Activated B cell treated with CpG ODN at 0.5 μM for 24 hours (primary cell): ENCODE measurements at regions of chr11 and their contacts with region 1.

Region 1: DNA sequence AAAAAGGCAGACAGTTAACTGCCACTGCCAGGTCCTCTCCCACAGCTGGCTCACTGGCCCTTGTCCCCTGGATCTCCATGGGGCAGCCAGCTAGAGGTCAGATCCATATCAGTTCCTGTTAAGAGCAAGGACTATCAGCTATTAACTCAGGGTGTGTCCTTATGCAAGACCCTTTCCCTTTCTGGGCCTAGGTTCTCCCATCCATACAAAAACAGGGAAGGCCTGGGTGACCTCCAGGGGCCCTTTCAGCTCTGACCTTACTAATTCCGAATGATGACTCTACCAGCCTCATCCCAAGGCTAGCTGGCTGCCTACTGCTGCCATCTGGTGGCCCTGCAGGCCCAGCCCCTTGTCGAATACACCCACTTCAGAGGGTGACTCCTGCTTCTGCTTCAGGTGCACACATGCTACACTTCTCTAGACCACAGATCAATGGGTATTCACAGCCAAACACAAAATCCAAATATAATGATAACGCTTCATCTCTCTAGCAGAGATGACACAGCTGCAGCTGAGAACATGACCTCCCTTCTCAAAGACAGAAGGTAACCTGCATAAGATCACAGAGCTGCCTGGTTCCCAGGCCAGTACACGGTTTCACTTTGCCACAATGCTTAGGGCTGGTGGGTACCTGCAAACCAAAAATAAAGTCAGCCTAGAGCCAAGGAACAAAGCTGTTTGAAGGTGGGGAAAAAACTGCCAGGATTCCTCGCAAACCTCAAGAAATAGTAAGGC is 34.1 kb downstream of the SERGEF start:
- DNase-seq: no peak
- ATAC-seq: peak; percentile 25
- H3K4me3 Mint-ChIP-seq: no peak overlapping the region
- H3K27ac Mint-ChIP-seq: no peak overlapping the region
- H3K4me1 Mint-ChIP-seq: no peaks in the 10 kb centered on the region
- H3K27me3 Mint-ChIP-seq: no peaks in the 10 kb centered on the region
- CTCF ChIP-seq: no peak

Region 2: DNA sequence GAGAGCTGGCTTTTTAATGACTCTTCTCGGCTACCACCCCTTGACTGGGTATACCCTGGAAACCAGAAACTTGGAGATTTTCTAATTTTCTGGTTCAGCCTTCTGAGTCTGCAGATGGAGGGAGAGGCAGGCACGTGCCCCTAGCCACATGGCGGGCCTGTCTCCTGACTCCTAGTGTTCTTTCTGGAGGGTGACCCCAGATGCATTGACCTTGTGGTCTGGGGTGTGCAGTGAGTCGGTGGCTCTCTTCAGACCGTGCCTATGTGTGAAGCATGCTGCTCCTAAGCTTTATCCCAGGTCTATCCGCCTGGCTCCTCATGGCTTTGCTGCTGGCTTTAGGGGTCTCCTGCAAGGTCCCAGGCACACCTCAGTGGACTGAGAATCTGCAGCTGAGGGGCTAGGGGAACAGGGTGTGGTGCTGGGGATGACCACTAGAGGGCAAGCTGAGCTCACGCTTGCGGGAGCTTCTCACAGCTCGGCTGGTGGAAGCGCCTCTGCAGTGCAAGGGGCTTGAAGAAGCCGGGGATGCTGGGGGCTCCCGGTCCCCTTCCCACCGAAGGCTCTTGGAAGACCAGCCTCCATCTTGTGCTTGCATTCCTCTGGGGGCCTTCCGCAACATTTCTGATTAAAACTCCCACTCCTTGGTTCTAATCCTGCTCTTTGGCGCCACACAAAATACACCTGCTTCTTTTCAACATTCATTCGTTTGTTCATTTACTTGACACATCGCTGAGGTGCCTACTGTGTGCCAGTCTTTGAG is 379.8 kb before region 1 on chr11:
- CTCF ChIA-PET with region 1: interaction called, 14 read pairs
- POLR2A ChIA-PET with region 1: no interaction called
- intact Hi-C with region 1: no loop called
- DNase-seq: peak; percentile 54
- ATAC-seq: peak; percentile 83
- H3K4me3 Mint-ChIP-seq: no peak overlapping the region
- H3K27ac Mint-ChIP-seq: no peak overlapping the region
- H3K4me1 Mint-ChIP-seq: no peaks in the 10 kb centered on the region
- H3K27me3 Mint-ChIP-seq: no peaks in the 10 kb centered on the region
- CTCF ChIP-seq: peak; percentile 32

Region 3: GRCh38 chr11:17730608-17731462 is 247.9 kb before region 1 on chr11:
- CTCF ChIA-PET with region 1: interaction called, 62 read pairs
- POLR2A ChIA-PET with region 1: no interaction called
- intact Hi-C with region 1: loop called (anchors 1 kb)
- DNase-seq: peak; percentile 42
- ATAC-seq: peak; percentile 73
- H3K4me3 Mint-ChIP-seq: no peak overlapping the region
- H3K27ac Mint-ChIP-seq: no peak overlapping the region
- H3K4me1 Mint-ChIP-seq: peaks cover 5% of the 10 kb centered on the region
- H3K27me3 Mint-ChIP-seq: peaks cover 39% of the 10 kb centered on the region
- CTCF ChIP-seq: no peak

Region 4: GRCh38 chr11:17760102-17761029 is 218.4 kb before region 1 on chr11:
- CTCF ChIA-PET with region 1: no interaction called
- POLR2A ChIA-PET with region 1: no interaction called
- intact Hi-C with region 1: loop called (anchors 1 kb)
- DNase-seq: no peak
- ATAC-seq: peak; percentile 28
- H3K4me3 Mint-ChIP-seq: no peak overlapping the region
- H3K27ac Mint-ChIP-seq: no peak overlapping the region
- H3K4me1 Mint-ChIP-seq: no peaks in the 10 kb centered on the region
- H3K27me3 Mint-ChIP-seq: peaks cover 3% of the 10 kb centered on the region
- CTCF ChIP-seq: no peak

Region 5: GRCh38 chr11:17968206-17968605 is 10.5 kb before region 1 on chr11:
- CTCF ChIA-PET with region 1: interaction called, 12 read pairs
- POLR2A ChIA-PET with region 1: no interaction called
- intact Hi-C with region 1: no loop called
- DNase-seq: no peak
- ATAC-seq: no peak
- H3K4me3 Mint-ChIP-seq: no peak overlapping the region
- H3K27ac Mint-ChIP-seq: no peak overlapping the region
- H3K4me1 Mint-ChIP-seq: no peaks in the 10 kb centered on the region
- H3K27me3 Mint-ChIP-seq: no peaks in the 10 kb centered on the region
- CTCF ChIP-seq: no peak